K562 (cell line): ENCODE measurements at regions of chr1 and their contacts with region 1.

Region 1: GRCh38 chr1:42952303-42953001 is 6.2 kb downstream of the SLC2A1 start:
- DNase-seq: peak; percentile 61 to 91 (median 74)
- ATAC-seq: peak; percentile 83
- H3K4me3 ChIP-seq: no peak overlapping the region
- H3K27ac ChIP-seq: peak overlapping the region; percentile 64
- H3K4me1 ChIP-seq: peaks cover 67 to 79% of the 10 kb centered on the region in 2 experiments
- H3K27me3 ChIP-seq: no peaks in the 10 kb centered on the region
- CTCF ChIP-seq: no peak
- EP300 ChIP-seq: peak; percentile 87
- POLR2A ChIP-seq: no peak
- RAD21 ChIP-seq: peak in 1 of 2 experiments; percentile 33; a peak in 2 of 4 replicates

Region 2: DNA sequence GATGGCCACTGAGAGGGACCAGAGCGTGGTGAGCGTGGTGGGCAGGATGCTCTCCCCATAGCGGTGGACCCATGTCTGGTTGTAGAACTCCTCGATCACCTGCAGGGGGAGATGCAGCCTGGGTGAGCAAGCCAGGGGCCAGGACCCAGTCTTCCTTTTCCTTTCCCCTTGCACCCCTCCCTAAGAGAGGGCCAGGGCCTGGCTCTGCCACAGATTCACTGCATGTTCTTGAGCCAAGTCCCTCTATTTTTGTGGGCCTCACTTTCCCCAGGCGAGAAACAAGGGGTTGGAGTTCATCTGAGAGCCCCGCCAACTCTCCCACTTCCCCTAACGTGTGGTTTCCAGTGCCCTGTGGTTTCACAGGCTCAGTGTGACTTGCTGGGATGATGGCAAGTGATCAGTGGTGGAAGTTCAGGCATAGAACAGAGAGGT is 21.3 kb before region 1 on chr1:
- CTCF ChIA-PET with region 1: no interaction called
- POLR2A ChIA-PET with region 1: interaction called, 47 read pairs
- in situ Hi-C with region 1: no loop called
- intact Hi-C with region 1: loop called (anchors 1 kb)
- DNase-seq: peak; percentile 76 to 83 (median 76)
- ATAC-seq: peak; percentile 85
- H3K4me3 ChIP-seq: no peak overlapping the region
- H3K27ac ChIP-seq: peak overlapping the region; percentile 53; the same call in 1 of the 3 replicates
- H3K4me1 ChIP-seq: peaks cover 60 to 79% of the 10 kb centered on the region in 2 experiments
- H3K27me3 ChIP-seq: no peaks in the 10 kb centered on the region
- CTCF ChIP-seq: peak; percentile 71 to 81 (median 80)
- EP300 ChIP-seq: no peak
- POLR2A ChIP-seq: no peak
- RAD21 ChIP-seq: peak; percentile 59 to 89

Region 3: GRCh38 chr1:42936309-42937078 is 16.0 kb before region 1 on chr1:
- CTCF ChIA-PET with region 1: no interaction called
- POLR2A ChIA-PET with region 1: interaction called, 47 read pairs
- in situ Hi-C with region 1: no loop called
- intact Hi-C with region 1: loop called (anchors 1 kb)
- DNase-seq: peak; percentile 93 to 98 (median 95)
- ATAC-seq: peak; percentile 89
- H3K4me3 ChIP-seq: no peak overlapping the region
- H3K27ac ChIP-seq: peak overlapping the region; percentile 74
- H3K4me1 ChIP-seq: peaks cover 96% of the 10 kb centered on the region in 2 experiments
- H3K27me3 ChIP-seq: no peaks in the 10 kb centered on the region
- CTCF ChIP-seq: no peak
- EP300 ChIP-seq: peak; percentile 94
- POLR2A ChIP-seq: 0 out of 2 replicates have a peak, but pooled peaks have one; percentile 5
- RAD21 ChIP-seq: peak in 1 of 2 experiments; percentile 33; a peak in 1 of 4 replicates

Region 4: DNA sequence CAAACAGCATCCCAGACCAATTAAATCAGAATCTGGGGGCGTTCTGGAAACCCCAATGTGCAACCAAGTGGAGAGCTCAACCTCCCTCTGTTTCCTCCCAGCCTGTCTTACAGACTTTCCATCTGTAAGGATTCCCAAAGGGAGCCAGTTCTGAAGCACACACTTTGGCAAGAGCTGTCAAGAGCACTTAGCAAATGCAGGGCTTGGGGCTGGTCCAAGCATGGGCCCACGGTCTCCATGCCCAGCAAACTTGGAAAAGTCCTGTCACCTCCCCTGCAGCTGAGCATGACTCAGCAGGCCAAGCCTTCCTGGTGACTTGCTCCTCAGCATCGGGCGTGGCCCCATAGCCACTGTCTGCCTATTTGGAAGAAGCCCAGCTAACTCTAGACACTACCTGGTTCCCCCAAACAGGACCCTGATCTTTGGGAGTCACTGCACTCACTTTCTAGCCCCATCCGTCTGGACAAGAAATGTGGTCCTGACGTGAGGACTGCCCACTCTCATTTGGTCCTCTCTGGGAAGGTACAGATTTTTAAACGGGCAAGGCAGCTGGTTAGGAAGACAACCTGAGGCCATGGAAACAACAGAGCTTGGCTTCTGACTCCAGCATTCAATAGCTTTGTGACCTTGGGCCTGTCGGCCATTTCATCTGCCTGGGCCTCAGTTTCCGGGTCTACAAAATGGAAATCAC is 10.7 kb before region 1 on chr1:
- CTCF ChIA-PET with region 1: interaction called, 3 read pairs
- POLR2A ChIA-PET with region 1: interaction called, 47 read pairs
- in situ Hi-C with region 1: no loop called
- intact Hi-C with region 1: loop called (anchors 1 kb)
- DNase-seq: peak; percentile 72 to 93 (median 78)
- ATAC-seq: peak; percentile 82
- H3K4me3 ChIP-seq: no peak overlapping the region
- H3K27ac ChIP-seq: peak overlapping the region; percentile 56
- H3K4me1 ChIP-seq: peaks cover 88 to 90% of the 10 kb centered on the region in 2 experiments
- H3K27me3 ChIP-seq: no peaks in the 10 kb centered on the region
- CTCF ChIP-seq: no peak
- EP300 ChIP-seq: peak; percentile 46; the same call in 1 of the 2 replicates
- POLR2A ChIP-seq: no peak
- RAD21 ChIP-seq: 0 out of 4 replicates have a peak, but pooled peaks of 1 of the 2 experiments have one; percentile 4

Region 5: DNA sequence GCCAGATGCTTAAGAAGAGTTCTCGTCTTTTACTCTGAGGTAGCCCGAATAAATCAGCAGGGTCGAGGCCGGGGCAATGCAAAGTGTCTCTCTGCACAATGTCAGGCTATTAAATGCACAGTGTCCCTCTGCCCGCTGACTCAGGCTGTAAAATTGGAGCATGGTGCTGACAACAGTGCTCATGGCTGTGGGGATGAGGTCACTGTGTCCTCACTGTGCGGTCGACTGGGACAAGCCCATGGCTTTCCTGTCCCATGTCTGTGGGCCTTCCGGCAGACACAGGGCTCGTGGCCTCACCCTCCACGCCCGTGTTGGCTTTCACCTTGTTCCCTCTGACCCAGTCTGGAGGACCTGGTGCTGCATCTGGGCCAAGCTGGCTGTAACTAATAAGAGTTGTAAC is 20.9 kb after region 1 on chr1:
- CTCF ChIA-PET with region 1: no interaction called
- POLR2A ChIA-PET with region 1: interaction called, 10 read pairs
- in situ Hi-C with region 1: no loop called
- intact Hi-C with region 1: no loop called
- DNase-seq: no peak
- ATAC-seq: peak; percentile 63
- H3K4me3 ChIP-seq: no peak overlapping the region
- H3K27ac ChIP-seq: no peak overlapping the region
- H3K4me1 ChIP-seq: peaks cover 4 to 11% of the 10 kb centered on the region in 2 experiments; a peak in 3 of 5 replicates
- H3K27me3 ChIP-seq: no peaks in the 10 kb centered on the region
- CTCF ChIP-seq: no peak
- EP300 ChIP-seq: no peak
- POLR2A ChIP-seq: no peak
- RAD21 ChIP-seq: no peak

Region 6: GRCh38 chr1:43005452-43006361 is 53.3 kb after region 1 on chr1:
- CTCF ChIA-PET with region 1: no interaction called
- POLR2A ChIA-PET with region 1: no interaction called
- in situ Hi-C with region 1: no loop called
- intact Hi-C with region 1: no loop called
- DNase-seq: peak; percentile 61 to 76 (median 67)
- ATAC-seq: peak; percentile 76
- H3K4me3 ChIP-seq: no peak overlapping the region
- H3K27ac ChIP-seq: peak overlapping the region; percentile 14; the same call in 1 of the 3 replicates
- H3K4me1 ChIP-seq: peaks cover 33 to 47% of the 10 kb centered on the region in 2 experiments
- H3K27me3 ChIP-seq: no peaks in the 10 kb centered on the region; a peak in 1 of 5 replicates
- CTCF ChIP-seq: no peak
- EP300 ChIP-seq: no peak
- POLR2A ChIP-seq: no peak
- RAD21 ChIP-seq: no peak

Region 7: DNA sequence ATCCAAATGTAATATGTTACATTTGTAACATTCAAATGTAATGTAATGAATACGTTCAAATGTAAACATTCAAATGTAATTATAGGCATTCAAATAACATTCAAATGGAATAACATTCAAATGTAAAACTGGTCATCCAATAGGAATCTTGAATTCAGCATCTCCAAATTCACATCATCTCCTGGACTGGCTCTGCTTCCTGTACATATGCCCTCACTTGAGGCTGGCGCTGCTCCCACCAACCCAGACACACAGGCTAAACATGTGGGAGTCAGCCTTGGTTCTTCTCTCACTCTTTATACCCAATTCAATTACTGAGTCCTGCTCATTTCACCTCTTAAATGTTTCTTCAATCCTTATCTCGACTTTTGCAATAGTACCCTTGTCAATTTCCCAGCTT is 212.7 kb after region 1 on chr1:
- CTCF ChIA-PET with region 1: no interaction called
- POLR2A ChIA-PET with region 1: no interaction called
- in situ Hi-C with region 1: no loop called
- intact Hi-C with region 1: no loop called
- DNase-seq: no peak
- ATAC-seq: no peak
- H3K4me3 ChIP-seq: no peak overlapping the region
- H3K27ac ChIP-seq: no peak overlapping the region
- H3K4me1 ChIP-seq: no peaks in the 10 kb centered on the region; a peak in 1 of 5 replicates
- H3K27me3 ChIP-seq: no peaks in the 10 kb centered on the region
- CTCF ChIP-seq: no peak
- EP300 ChIP-seq: no peak
- POLR2A ChIP-seq: no peak
- RAD21 ChIP-seq: no peak